ENCODE measurements at regions of chr9 and their contacts with region 1.

Region 1: GRCh38 chr9:96854073-96854876 is at the start of gene ZNF782:
- DNase-seq: peak; percentile 93
- ATAC-seq: peak; percentile 78
- H3K4me3 ChIP-seq: peak within 1 kb of the TSS; percentile 78 to 84 (median 83)
- H3K27ac ChIP-seq: peak within 1 kb of the TSS; percentile 87
- H3K4me1 ChIP-seq: peaks cover 73% of the 10 kb centered on the region
- H3K27me3 ChIP-seq: no peaks in the 10 kb centered on the region
- CTCF ChIP-seq: peak; percentile 31; the same call in 1 of the 2 replicates
- EP300 ChIP-seq: 0 out of 4 replicates have a peak, but pooled peaks of 1 of the 2 experiments have one; percentile 26
- POLR2A ChIP-seq: peak; percentile 44 to 63; a peak in 3 of 4 replicates
- RAD21 ChIP-seq: peak; percentile 22; the same call in 1 of the 2 replicates
- total RNA-seq, gene ZNF782: 4.7 and 4.9 TPM in 2 replicates

Region 2: GRCh38 chr9:96782235-96782634 is 72.0 kb before region 1 on chr9:
- CTCF ChIA-PET with region 1: no interaction called
- POLR2A ChIA-PET with region 1: no interaction called
- in situ Hi-C with region 1: no loop called
- intact Hi-C with region 1: no loop called
- DNase-seq: no peak
- ATAC-seq: no peak
- H3K4me3 ChIP-seq: no peak overlapping the region
- H3K27ac ChIP-seq: no peak overlapping the region
- H3K4me1 ChIP-seq: 0 out of 2 replicates have a peak, but pooled peaks cover 3% of the 10 kb centered on the region
- H3K27me3 ChIP-seq: no peaks in the 10 kb centered on the region; a peak in 1 of 5 replicates
- CTCF ChIP-seq: no peak
- EP300 ChIP-seq: no peak
- POLR2A ChIP-seq: no peak
- RAD21 ChIP-seq: no peak

Region 3: GRCh38 chr9:96875461-96876364 is 21.4 kb after region 1 on chr9:
- CTCF ChIA-PET with region 1: interaction called, 3 read pairs
- POLR2A ChIA-PET with region 1: interaction called, 59 read pairs
- in situ Hi-C with region 1: no loop called
- intact Hi-C with region 1: loop called (anchors 1 kb)
- DNase-seq: peak; percentile 96
- ATAC-seq: peak; percentile 92
- H3K4me3 ChIP-seq: peak overlapping the region; percentile 53 to 74 (median 59)
- H3K27ac ChIP-seq: peak overlapping the region; percentile 71
- H3K4me1 ChIP-seq: peaks cover 18% of the 10 kb centered on the region
- H3K27me3 ChIP-seq: no peaks in the 10 kb centered on the region; a peak in 1 of 5 replicates
- CTCF ChIP-seq: peak; percentile 80
- EP300 ChIP-seq: no peak
- POLR2A ChIP-seq: peak in 1 of 2 experiments; percentile 75; a peak in 3 of 4 replicates
- RAD21 ChIP-seq: peak; percentile 39; the same call in 1 of the 2 replicates

Region 4: GRCh38 chr9:97109194-97109811 is 255.0 kb after region 1 on chr9:
- CTCF ChIA-PET with region 1: interaction called, 7 read pairs
- POLR2A ChIA-PET with region 1: no interaction called
- in situ Hi-C with region 1: no loop called
- intact Hi-C with region 1: loop called (anchors 1 kb)
- DNase-seq: peak; percentile 64
- ATAC-seq: peak; percentile 87
- H3K4me3 ChIP-seq: no peak overlapping the region
- H3K27ac ChIP-seq: no peak overlapping the region
- H3K4me1 ChIP-seq: 0 out of 2 replicates have a peak, but pooled peaks cover 4% of the 10 kb centered on the region
- H3K27me3 ChIP-seq: 0 out of 5 replicates have a peak, but pooled peaks cover 0 to 6% of the 10 kb centered on the region in 2 experiments
- CTCF ChIP-seq: peak; percentile 74
- EP300 ChIP-seq: no peak
- POLR2A ChIP-seq: no peak
- RAD21 ChIP-seq: no peak

Region 5: DNA sequence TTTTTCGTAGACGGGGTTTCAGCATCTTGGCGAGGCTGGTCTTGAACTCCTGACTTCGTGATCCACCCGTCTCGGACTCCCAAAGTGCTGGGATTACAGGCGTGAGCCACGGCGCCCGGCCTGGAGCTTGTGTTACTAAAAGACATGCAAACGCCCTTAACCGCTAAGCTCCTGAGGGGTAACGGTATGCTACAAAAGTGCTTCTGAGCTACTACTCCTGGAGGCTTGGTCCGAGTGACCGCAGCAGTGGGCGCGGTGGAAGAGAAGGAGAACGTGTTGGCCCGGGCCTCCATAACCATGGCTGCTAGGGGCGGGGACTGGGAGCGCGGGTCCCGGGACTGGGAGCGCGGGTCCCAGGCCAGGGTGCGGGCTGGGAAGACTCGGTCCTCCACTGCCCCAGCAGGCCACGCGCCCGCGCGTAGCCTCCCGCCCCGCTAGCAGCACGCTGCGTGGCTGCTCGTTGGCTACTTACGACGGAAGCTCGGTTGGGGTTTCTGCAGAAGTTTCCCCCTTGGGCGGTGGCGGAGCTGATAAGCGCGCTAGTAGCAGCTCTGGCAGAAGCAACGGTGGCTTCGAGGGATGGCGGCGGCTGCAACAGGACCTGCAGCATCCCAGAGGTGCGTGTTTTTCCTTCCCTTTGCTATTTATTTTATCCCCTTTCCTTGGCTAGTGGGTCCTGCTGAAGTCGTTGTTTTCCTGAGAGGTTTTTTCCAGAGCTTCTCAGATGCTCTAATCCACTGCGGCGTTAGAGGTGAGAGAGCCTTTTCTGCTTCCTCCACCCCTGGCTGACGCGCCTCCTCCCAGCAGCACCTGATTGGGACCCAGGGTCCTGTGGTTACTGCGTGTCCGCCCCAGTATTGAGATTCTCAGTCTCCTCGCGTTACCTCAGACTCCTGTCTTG is 383.9 kb after region 1 on chr9:
- CTCF ChIA-PET with region 1: no interaction called
- POLR2A ChIA-PET with region 1: interaction called, 11 read pairs
- in situ Hi-C with region 1: no loop called
- intact Hi-C with region 1: loop called (anchors 10 kb)
- DNase-seq: peak; percentile 52
- ATAC-seq: peak; percentile 96
- H3K4me3 ChIP-seq: peak overlapping the region; percentile 56 to 73 (median 58)
- H3K27ac ChIP-seq: peak overlapping the region; percentile 89
- H3K4me1 ChIP-seq: peaks cover 1% of the 10 kb centered on the region; the same call in 1 of the 2 replicates
- H3K27me3 ChIP-seq: no peaks in the 10 kb centered on the region
- CTCF ChIP-seq: 0 out of 2 replicates have a peak, but pooled peaks have one; percentile 2
- EP300 ChIP-seq: no peak
- POLR2A ChIP-seq: peak in 1 of 2 experiments; percentile 42
- RAD21 ChIP-seq: no peak

Region 6: DNA sequence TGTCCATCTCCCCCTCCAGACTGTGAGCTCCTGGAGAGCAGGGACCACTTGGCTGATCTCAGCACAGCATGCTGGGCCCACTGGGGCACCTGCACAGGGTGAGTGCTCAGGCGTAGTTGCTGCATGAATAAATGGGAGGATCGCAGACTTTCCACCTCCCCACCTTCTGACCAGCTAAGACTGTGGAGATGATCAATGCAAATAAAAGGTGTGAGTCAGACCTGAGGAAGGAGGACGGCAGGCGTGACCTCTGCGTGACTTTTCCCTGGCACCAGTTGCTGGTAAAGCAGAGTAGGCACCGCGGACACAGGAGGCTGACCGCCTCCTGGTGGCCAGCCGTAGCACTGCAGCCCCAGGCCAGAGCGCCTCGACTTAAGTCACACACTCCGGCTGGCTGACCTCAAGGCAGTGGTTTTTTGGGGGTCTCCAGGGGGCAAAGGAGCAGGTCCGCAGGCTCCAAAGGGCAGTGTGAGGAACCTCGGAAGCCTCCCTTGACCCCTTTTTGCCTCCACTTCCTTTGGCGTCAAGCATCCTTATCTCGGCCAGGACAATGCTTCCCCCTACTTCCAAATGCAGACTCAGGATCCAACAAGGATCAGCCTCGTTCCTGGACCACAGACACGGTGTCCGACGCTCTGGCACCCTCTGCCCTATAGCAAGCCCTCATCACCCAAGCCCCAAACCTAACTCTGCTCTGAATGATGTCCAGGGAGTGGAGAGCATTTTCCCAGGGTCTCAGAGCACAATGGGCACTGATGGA is 544.9 kb after region 1 on chr9:
- CTCF ChIA-PET with region 1: interaction called, 6 read pairs
- POLR2A ChIA-PET with region 1: interaction called, 9 read pairs
- in situ Hi-C with region 1: loop called (anchors 10 kb)
- intact Hi-C with region 1: no loop called
- DNase-seq: peak; percentile 54
- ATAC-seq: peak; percentile 73
- H3K4me3 ChIP-seq: peak overlapping the region in 1 of 3 experiments; percentile 12; a peak in 1 of 6 replicates
- H3K27ac ChIP-seq: no peak overlapping the region
- H3K4me1 ChIP-seq: peaks cover 92% of the 10 kb centered on the region
- H3K27me3 ChIP-seq: no peaks in the 10 kb centered on the region
- CTCF ChIP-seq: peak; percentile 94
- EP300 ChIP-seq: no peak
- POLR2A ChIP-seq: no peak
- RAD21 ChIP-seq: peak; percentile 93

Region 7: GRCh38 chr9:97598461-97599288 is 744.4 kb after region 1 on chr9:
- CTCF ChIA-PET with region 1: no interaction called
- POLR2A ChIA-PET with region 1: no interaction called
- in situ Hi-C with region 1: loop called (anchors 25 kb)
- intact Hi-C with region 1: loop called (anchors 5 kb)
- DNase-seq: peak; percentile 69
- ATAC-seq: peak; percentile 91
- H3K4me3 ChIP-seq: no peak overlapping the region
- H3K27ac ChIP-seq: no peak overlapping the region
- H3K4me1 ChIP-seq: peaks cover 6% of the 10 kb centered on the region
- H3K27me3 ChIP-seq: no peaks in the 10 kb centered on the region
- CTCF ChIP-seq: peak; percentile 86
- EP300 ChIP-seq: no peak
- POLR2A ChIP-seq: no peak
- RAD21 ChIP-seq: peak; percentile 53; the same call in 1 of the 2 replicates

Region 8: DNA sequence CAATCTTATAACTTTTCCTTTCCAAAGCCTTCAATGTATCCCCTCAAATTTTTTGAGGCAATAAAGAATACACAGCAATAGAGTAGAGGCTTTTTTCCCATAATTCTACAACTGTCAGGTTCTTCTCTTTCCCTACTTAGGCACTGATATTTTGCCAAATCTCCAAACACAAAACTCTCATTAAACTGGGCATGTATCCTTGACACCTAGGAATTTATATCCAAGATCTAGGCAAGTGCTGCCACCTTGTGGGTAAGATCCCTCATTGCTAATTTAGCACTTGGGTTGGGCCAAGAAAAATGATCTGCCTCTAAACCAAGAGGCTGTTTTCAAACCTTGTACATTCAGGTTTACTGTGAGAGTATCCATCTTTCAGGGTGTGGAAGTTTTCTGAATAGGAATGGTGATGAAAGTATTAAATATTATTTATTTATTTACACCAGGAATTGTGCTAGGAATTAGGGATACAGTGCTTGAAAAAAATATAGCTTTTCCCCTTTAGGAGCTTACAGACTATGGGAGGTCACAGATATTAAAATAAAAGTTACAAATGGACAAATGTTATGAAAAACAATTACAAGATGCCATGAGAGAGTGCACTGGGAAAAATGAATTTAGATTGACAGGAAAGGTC is 761.3 kb after region 1 on chr9:
- CTCF ChIA-PET with region 1: no interaction called
- POLR2A ChIA-PET with region 1: no interaction called
- in situ Hi-C with region 1: loop called (anchors 25 kb)
- intact Hi-C with region 1: loop called (anchors 5 kb)
- DNase-seq: peak; percentile 39
- ATAC-seq: peak; percentile 49; the same call in 1 of the 3 replicates
- H3K4me3 ChIP-seq: no peak overlapping the region
- H3K27ac ChIP-seq: no peak overlapping the region
- H3K4me1 ChIP-seq: no peaks in the 10 kb centered on the region
- H3K27me3 ChIP-seq: no peaks in the 10 kb centered on the region
- CTCF ChIP-seq: peak; percentile 82
- EP300 ChIP-seq: no peak
- POLR2A ChIP-seq: no peak
- RAD21 ChIP-seq: peak; percentile 52; the same call in 1 of the 2 replicates

Measured in HepG2 (cell line).